ENCODE measurements at regions of chr14 and their contacts with region 1.

Region 1: DNA sequence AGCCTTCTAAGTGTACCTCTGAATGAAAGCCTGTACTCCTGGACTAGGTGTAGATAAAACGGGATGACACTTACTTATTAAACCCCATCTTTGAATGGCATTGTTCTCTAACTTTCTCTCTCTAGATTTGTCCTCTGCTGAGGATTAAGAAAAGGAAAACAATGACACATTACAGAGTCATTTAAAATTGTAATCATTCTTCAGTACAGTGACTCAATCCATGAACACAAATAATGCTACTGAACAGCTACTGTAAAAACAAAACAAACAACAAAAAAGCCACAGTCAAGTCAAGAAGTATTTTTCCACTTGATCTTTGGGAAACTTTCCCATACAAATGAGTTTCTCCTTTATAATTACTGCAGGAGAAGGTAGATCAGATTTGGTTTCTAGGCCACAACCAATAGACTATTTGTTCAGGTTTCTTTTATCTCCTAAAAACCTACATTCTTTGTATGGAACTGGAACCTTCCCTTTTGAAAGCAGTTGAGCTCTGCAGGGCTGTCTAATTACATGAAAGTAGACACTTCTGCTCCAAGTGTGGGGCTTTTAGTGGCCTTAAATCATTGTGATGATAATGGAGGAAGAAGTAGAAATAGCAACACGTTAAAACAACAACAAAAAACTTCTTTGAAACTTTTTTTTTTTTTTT is 219.1 kb downstream of the ESR2 start:
- DNase-seq: no peak
- ATAC-seq: no peak
- H3K4me3 Mint-ChIP-seq: no peak overlapping the region
- H3K27ac Mint-ChIP-seq: no peak overlapping the region
- H3K4me1 Mint-ChIP-seq: no peaks in the 10 kb centered on the region
- H3K27me3 Mint-ChIP-seq: no peaks in the 10 kb centered on the region

Region 2: DNA sequence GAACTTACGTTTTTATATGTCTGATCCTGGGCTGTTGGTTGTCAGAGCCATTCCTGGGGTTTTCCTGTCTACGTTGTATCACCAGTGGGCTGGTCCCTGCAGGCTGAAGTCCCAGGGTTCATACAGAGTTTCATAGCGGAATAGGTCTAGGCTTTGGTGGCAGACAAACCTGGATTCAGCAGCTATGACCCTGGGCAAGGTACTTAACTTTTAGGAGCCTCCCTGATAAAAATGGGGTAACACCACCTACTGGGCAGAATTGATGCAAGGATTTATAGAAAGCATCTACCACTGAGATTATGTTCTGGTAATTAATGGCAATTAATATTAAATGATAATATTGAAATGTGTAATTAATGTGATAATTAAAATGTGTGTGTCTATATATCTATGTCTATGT is 81.1 kb before region 1 on chr14:
- CTCF ChIA-PET with region 1: no interaction called
- POLR2A ChIA-PET with region 1: no interaction called
- DNase-seq: no peak
- ATAC-seq: no peak
- H3K4me3 Mint-ChIP-seq: no peak overlapping the region
- H3K27ac Mint-ChIP-seq: no peak overlapping the region
- H3K4me1 Mint-ChIP-seq: peaks cover 24% of the 10 kb centered on the region
- H3K27me3 Mint-ChIP-seq: no peaks in the 10 kb centered on the region

Region 3: GRCh38 chr14:64038841-64039542 is 36.1 kb before region 1 on chr14:
- CTCF ChIA-PET with region 1: no interaction called
- POLR2A ChIA-PET with region 1: no interaction called
- DNase-seq: no peak
- ATAC-seq: no peak
- H3K4me3 Mint-ChIP-seq: no peak overlapping the region
- H3K27ac Mint-ChIP-seq: no peak overlapping the region
- H3K4me1 Mint-ChIP-seq: peaks cover 2% of the 10 kb centered on the region
- H3K27me3 Mint-ChIP-seq: no peaks in the 10 kb centered on the region

Region 4: GRCh38 chr14:64049616-64050381 is 25.3 kb before region 1 on chr14:
- CTCF ChIA-PET with region 1: no interaction called
- POLR2A ChIA-PET with region 1: no interaction called
- DNase-seq: no peak
- ATAC-seq: no peak
- H3K4me3 Mint-ChIP-seq: no peak overlapping the region
- H3K27ac Mint-ChIP-seq: no peak overlapping the region
- H3K4me1 Mint-ChIP-seq: no peaks in the 10 kb centered on the region
- H3K27me3 Mint-ChIP-seq: no peaks in the 10 kb centered on the region

Region 5: DNA sequence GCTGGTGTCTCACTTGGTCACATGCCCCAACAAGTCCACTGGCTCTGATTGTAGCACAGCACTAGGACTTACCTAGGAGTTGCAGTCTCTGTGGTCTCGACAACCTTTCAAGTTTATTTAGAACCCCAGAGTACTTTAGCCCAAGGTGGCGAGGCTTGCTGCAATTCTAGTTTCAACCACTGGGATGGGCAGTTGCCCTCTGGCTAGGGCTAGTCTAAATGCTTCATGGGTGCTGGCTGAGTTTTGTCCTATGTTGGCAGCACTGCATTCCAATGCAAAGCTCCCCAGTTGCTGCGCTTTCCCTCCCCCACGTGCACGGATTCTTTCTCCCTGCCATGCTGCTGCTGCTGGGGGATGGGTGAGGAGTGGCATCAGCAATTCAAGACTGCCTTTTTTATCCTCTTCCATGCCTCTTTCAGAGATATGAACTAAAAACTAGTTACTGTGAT is 14.4 kb before region 1 on chr14:
- CTCF ChIA-PET with region 1: interaction called, 10 read pairs
- POLR2A ChIA-PET with region 1: no interaction called
- DNase-seq: peak; percentile 24
- ATAC-seq: peak; percentile 64
- H3K4me3 Mint-ChIP-seq: no peak overlapping the region
- H3K27ac Mint-ChIP-seq: no peak overlapping the region
- H3K4me1 Mint-ChIP-seq: no peaks in the 10 kb centered on the region
- H3K27me3 Mint-ChIP-seq: no peaks in the 10 kb centered on the region

Measured in activated CD8-positive, alpha-beta T cell treated with anti-CD3 and anti-CD28 coated beads, Interleukin-2, amount 10 ng/mL, durations not matched to agents 7 days and 5 days (primary cell).